Breast epithelium (tissue), 4 donors: ENCODE measurements at regions of chr11 and their contacts with region 1.

Region 1: DNA sequence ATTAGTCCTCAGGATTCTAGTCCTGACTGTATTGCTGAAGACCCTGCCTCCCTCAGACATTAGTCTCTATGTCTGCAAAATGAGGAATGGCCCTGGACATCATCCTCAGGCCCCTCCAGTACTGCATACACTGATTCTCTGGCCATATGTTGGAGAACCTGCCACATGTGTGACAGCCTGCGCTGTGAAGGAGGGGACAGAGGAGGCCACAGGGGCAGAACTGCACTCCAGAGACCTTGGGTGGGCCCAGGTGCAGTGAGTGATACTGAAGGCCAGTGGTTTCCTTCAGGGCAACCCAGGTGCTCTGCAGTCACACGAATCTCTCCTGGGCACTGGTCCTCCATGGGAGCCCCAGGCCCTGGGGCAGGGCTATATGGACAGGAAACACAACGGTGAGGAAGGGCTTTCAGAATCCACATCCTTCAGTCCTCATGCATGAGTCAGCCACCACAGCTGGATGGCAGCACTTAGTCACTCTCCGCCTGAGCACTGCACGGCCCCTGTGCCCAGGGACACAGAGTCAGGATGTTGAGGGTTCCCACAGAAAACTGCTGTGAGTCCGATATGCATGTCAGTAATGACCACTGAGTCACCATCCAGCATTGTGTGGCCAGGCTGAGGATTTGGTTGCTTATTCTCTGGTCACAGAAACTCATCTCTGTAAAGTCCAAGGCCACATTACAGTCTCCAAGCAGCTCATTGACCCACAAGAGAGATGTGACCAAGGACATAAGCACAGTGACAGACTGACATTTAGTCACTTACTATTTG is 39.7 kb downstream of the ME3 start:
- DNase-seq: no peak
- H3K4me3 ChIP-seq: no peak overlapping the region
- H3K27ac ChIP-seq: no peak overlapping the region
- H3K4me1 ChIP-seq: no peaks in the 10 kb centered on the region
- H3K27me3 ChIP-seq: no peaks in the 10 kb centered on the region
- CTCF ChIP-seq: peak in 1 of 3 donors; percentile 11
- POLR2A ChIP-seq: no peak

Region 2: GRCh38 chr11:86608251-86608799 is 24.4 kb before region 1 on chr11:
- intact Hi-C with region 1: loop called (anchors 2 kb)
- DNase-seq: peak; percentile 67 to 73
- H3K4me3 ChIP-seq: no peak overlapping the region
- H3K27ac ChIP-seq: peak overlapping the region in 1 of 2 donors; percentile 49
- H3K4me1 ChIP-seq: no peaks in the 10 kb centered on the region
- H3K27me3 ChIP-seq: no peaks in the 10 kb centered on the region
- CTCF ChIP-seq: peak; percentile 79 to 90 (median 85)
- POLR2A ChIP-seq: no peak

Region 3: GRCh38 chr11:86681483-86681756 is 48.7 kb after region 1 on chr11:
- intact Hi-C with region 1: loop called (anchors 1 kb)
- DNase-seq: no peak
- H3K4me3 ChIP-seq: no peak overlapping the region
- H3K27ac ChIP-seq: no peak overlapping the region
- H3K4me1 ChIP-seq: no peaks in the 10 kb centered on the region
- H3K27me3 ChIP-seq: no peaks in the 10 kb centered on the region
- CTCF ChIP-seq: no peak
- POLR2A ChIP-seq: no peak

Region 4: GRCh38 chr11:86696004-86696403 is 63.3 kb after region 1 on chr11:
- intact Hi-C with region 1: no loop called
- DNase-seq: no peak
- H3K4me3 ChIP-seq: no peak overlapping the region
- H3K27ac ChIP-seq: peak overlapping the region; percentile 74 to 85
- H3K4me1 ChIP-seq: peaks cover 0 to 12% of the 10 kb centered on the region in 2 donors
- H3K27me3 ChIP-seq: no peaks in the 10 kb centered on the region
- CTCF ChIP-seq: no peak
- POLR2A ChIP-seq: no peak

Region 5: GRCh38 chr11:87092159-87092558 is 459.5 kb after region 1 on chr11:
- intact Hi-C with region 1: no loop called
- DNase-seq: no peak
- H3K4me3 ChIP-seq: no peak overlapping the region
- H3K27ac ChIP-seq: no peak overlapping the region
- H3K4me1 ChIP-seq: no peaks in the 10 kb centered on the region
- H3K27me3 ChIP-seq: no peaks in the 10 kb centered on the region
- CTCF ChIP-seq: no peak
- POLR2A ChIP-seq: no peak